Naive thymus-derived CD4-positive, alpha-beta T cell (primary cell): ENCODE measurements at regions of chr15 and their contacts with region 1.

Region 1: GRCh38 chr15:78872972-78873792 is 492 bp downstream of the MORF4L1 start:
- DNase-seq: peak; percentile 75 to 91 (median 90)
- ATAC-seq: peak; percentile 79
- H3K4me3 ChIP-seq: peak overlapping the region; percentile 100
- H3K4me3 Mint-ChIP-seq: peak overlapping the region; percentile 94 to 100 (median 99)
- H3K27ac ChIP-seq: peak overlapping the region; percentile 100
- H3K27ac Mint-ChIP-seq: peak overlapping the region; percentile 100
- H3K4me1 ChIP-seq: peaks cover 37 to 38% of the 10 kb centered on the region in 2 donors
- H3K4me1 Mint-ChIP-seq: peaks cover 29 to 54% (median 45%) of the 10 kb centered on the region in 7 donors
- H3K27me3 ChIP-seq: no peaks in the 10 kb centered on the region
- H3K27me3 Mint-ChIP-seq: no peaks in the 10 kb centered on the region

Region 2: DNA sequence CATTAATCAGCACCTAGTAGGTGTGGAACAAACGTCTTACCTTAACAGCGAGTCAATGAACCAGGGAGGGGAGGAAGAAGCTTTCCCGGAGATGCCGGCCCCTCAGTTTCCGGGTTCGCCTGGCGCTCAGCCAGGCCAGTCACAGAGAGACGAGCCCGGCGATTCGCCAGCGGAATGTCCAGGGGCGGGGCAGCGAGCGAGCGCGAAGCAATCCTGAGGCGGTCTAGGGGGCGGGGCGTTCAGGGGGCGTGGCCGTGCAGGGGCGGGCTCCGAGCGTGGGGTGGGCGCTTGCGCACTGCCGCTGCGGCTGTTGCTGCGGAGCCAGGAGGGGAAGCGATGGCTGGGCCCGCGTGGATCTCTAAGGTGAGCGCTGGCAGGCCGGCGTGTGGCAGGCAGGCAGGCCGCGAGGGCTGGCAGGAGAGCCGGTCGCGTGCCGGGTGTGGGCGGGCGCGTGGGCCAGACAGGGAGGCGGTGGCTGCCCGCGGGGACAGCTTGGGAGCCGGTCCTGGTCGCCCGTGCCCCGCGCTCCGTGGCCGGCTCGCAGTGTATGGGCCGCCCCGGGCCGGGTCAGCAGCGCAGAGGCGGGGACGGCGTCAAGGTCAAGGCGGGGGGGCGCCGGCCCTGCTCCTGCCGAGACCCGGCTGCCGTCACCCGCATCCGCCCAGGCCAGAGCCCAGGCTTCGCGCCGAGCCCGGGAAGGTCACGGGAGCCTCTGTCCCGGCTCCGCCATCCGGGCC is 723.9 kb before region 1 on chr15 and contains the start of gene IDH3A:
- CTCF ChIA-PET with region 1: no interaction called
- POLR2A ChIA-PET with region 1: no interaction called
- intact Hi-C with region 1: loop called in 1 of 2 experiments (anchors 1 kb)
- DNase-seq: peak; percentile 97 to 100 (median 99)
- ATAC-seq: peak; percentile 99
- H3K4me3 ChIP-seq: peak within 1 kb of the TSS; percentile 76
- H3K4me3 Mint-ChIP-seq: peak within 1 kb of the TSS; percentile 93 to 98 (median 96)
- H3K27ac ChIP-seq: peak within 1 kb of the TSS; percentile 77
- H3K27ac Mint-ChIP-seq: peak within 1 kb of the TSS; percentile 91 to 97 (median 95)
- H3K4me1 ChIP-seq: peaks cover 17 to 24% of the 10 kb centered on the region in 2 donors
- H3K4me1 Mint-ChIP-seq: peaks cover 25 to 51% (median 43%) of the 10 kb centered on the region in 7 donors
- H3K27me3 ChIP-seq: no peaks in the 10 kb centered on the region
- H3K27me3 Mint-ChIP-seq: no peaks in the 10 kb centered on the region
- total RNA-seq, gene IDH3A: 44.4 to 105 (median 61.1) TPM

Region 3: GRCh38 chr15:78540141-78540928 is 332.8 kb before region 1 on chr15 and contains the start of gene PSMA4:
- CTCF ChIA-PET with region 1: no interaction called
- POLR2A ChIA-PET with region 1: interaction called, 8 read pairs
- intact Hi-C with region 1: loop called (anchors 1 kb)
- DNase-seq: peak; percentile 89 to 97 (median 95)
- ATAC-seq: peak; percentile 93
- H3K4me3 ChIP-seq: peak within 1 kb of the TSS; percentile 89
- H3K4me3 Mint-ChIP-seq: peak within 1 kb of the TSS; percentile 86 to 99 (median 92)
- H3K27ac ChIP-seq: peak within 1 kb of the TSS; percentile 99
- H3K27ac Mint-ChIP-seq: peak within 1 kb of the TSS; percentile 91 to 100 (median 99)
- H3K4me1 ChIP-seq: peaks cover 19 to 23% of the 10 kb centered on the region in 2 donors
- H3K4me1 Mint-ChIP-seq: peaks cover 18 to 47% (median 35%) of the 10 kb centered on the region in 7 donors
- H3K27me3 ChIP-seq: no peaks in the 10 kb centered on the region
- H3K27me3 Mint-ChIP-seq: peaks cover 0 to 4% (median 0%) of the 10 kb centered on the region in 5 donors
- total RNA-seq, gene PSMA4: 69.6 to 284 (median 79.9) TPM

Region 4: GRCh38 chr15:78761891-78762385 is 111.2 kb before region 1 on chr15:
- CTCF ChIA-PET with region 1: no interaction called
- POLR2A ChIA-PET with region 1: interaction called, 12 read pairs
- intact Hi-C with region 1: loop called (anchors 1 kb)
- DNase-seq: no peak
- ATAC-seq: no peak
- H3K4me3 ChIP-seq: peak overlapping the region; percentile 73
- H3K4me3 Mint-ChIP-seq: peak overlapping the region; percentile 44 to 76 (median 72)
- H3K27ac ChIP-seq: peak overlapping the region; percentile 67
- H3K27ac Mint-ChIP-seq: peak overlapping the region; percentile 84 to 93 (median 90)
- H3K4me1 ChIP-seq: peaks cover 15 to 22% of the 10 kb centered on the region in 2 donors
- H3K4me1 Mint-ChIP-seq: peaks cover 9 to 35% (median 27%) of the 10 kb centered on the region in 7 donors
- H3K27me3 ChIP-seq: no peaks in the 10 kb centered on the region
- H3K27me3 Mint-ChIP-seq: no peaks in the 10 kb centered on the region

Region 5: GRCh38 chr15:78778422-78778821 is 94.8 kb before region 1 on chr15:
- CTCF ChIA-PET with region 1: no interaction called
- POLR2A ChIA-PET with region 1: no interaction called
- intact Hi-C with region 1: no loop called
- DNase-seq: no peak
- ATAC-seq: no peak
- H3K4me3 ChIP-seq: no peak overlapping the region
- H3K4me3 Mint-ChIP-seq: no peak overlapping the region
- H3K27ac ChIP-seq: no peak overlapping the region
- H3K27ac Mint-ChIP-seq: no peak overlapping the region
- H3K4me1 ChIP-seq: no peaks in the 10 kb centered on the region
- H3K4me1 Mint-ChIP-seq: no peaks in the 10 kb centered on the region
- H3K27me3 ChIP-seq: no peaks in the 10 kb centered on the region
- H3K27me3 Mint-ChIP-seq: peaks cover 0 to 4% (median 0%) of the 10 kb centered on the region in 5 donors

Region 6: DNA sequence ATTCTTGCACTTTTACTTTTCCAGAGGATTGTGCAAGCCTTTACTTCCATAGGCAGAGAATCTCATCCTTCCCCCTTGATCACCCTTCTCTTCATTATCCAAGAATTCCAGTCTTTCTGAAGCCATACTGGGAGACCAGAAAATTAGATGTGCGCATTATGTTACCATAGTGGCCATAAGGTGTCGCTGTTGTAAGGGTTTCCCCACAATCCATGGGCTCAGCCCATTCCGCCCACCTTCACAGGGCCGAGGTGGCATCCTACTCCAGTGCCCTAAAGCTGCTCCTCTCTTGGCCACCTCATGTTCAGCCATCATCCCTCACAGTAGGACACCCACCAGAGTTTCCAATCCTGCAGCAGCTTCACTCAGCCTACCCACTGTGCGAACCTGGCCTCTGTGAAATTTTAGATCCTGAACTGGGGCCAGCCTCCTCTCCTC is 36.6 kb after region 1 on chr15:
- CTCF ChIA-PET with region 1: interaction called, 4 read pairs
- POLR2A ChIA-PET with region 1: interaction called, 4 read pairs
- intact Hi-C with region 1: loop called in 1 of 2 experiments (anchors 5 kb)
- DNase-seq: peak in 2 of 9 donors; percentile 19 to 23
- ATAC-seq: peak; percentile 65
- H3K4me3 ChIP-seq: no peak overlapping the region
- H3K4me3 Mint-ChIP-seq: no peak overlapping the region
- H3K27ac ChIP-seq: no peak overlapping the region
- H3K27ac Mint-ChIP-seq: peak overlapping the region in 6 of 9 donors; percentile 1 to 68 (median 39)
- H3K4me1 ChIP-seq: no peaks in the 10 kb centered on the region
- H3K4me1 Mint-ChIP-seq: peaks cover 5 to 41% (median 26%) of the 10 kb centered on the region in 7 donors
- H3K27me3 ChIP-seq: no peaks in the 10 kb centered on the region
- H3K27me3 Mint-ChIP-seq: no peaks in the 10 kb centered on the region

Region 7: GRCh38 chr15:79310983-79311900 is 438.1 kb after region 1 on chr15 and contains the start of gene TMED3:
- CTCF ChIA-PET with region 1: no interaction called
- POLR2A ChIA-PET with region 1: no interaction called
- intact Hi-C with region 1: no loop called
- DNase-seq: peak; percentile 58 to 85 (median 79)
- ATAC-seq: peak; percentile 92
- H3K4me3 ChIP-seq: peak within 1 kb of the TSS; percentile 90
- H3K4me3 Mint-ChIP-seq: peak within 1 kb of the TSS; percentile 85 to 93 (median 90)
- H3K27ac ChIP-seq: peak within 1 kb of the TSS; percentile 62
- H3K27ac Mint-ChIP-seq: peak within 1 kb of the TSS; percentile 4 to 74 (median 66)
- H3K4me1 ChIP-seq: peaks cover 13 to 20% of the 10 kb centered on the region in 2 donors
- H3K4me1 Mint-ChIP-seq: peaks cover 24 to 52% (median 46%) of the 10 kb centered on the region in 7 donors
- H3K27me3 ChIP-seq: no peaks in the 10 kb centered on the region
- H3K27me3 Mint-ChIP-seq: peaks cover 0 to 29% (median 4%) of the 10 kb centered on the region in 5 donors
- total RNA-seq, gene TMED3: 18.6 to 40.5 (median 21.1) TPM

Region 8: DNA sequence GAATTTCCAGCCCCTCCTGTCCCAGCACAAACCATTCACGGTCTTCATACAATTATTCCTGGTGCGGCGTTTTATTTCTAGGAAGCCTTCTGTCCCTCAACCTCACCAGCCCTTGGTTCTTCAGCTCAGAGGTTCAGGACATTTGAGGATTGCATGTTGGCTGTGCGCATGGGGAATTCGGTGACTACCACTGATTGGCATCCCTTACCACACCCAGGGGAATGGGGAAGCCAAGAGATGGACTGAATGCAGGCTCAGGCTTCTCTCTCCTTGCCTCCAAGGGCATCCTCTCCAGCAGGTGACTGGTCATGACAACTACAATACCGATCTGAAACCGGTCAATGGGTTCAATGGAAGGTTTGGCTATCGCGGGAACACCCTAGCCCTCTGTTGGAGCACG is 869.8 kb after region 1 on chr15:
- CTCF ChIA-PET with region 1: no interaction called
- POLR2A ChIA-PET with region 1: no interaction called
- intact Hi-C with region 1: no loop called
- DNase-seq: no peak
- ATAC-seq: no peak
- H3K4me3 ChIP-seq: no peak overlapping the region
- H3K4me3 Mint-ChIP-seq: no peak overlapping the region
- H3K27ac ChIP-seq: no peak overlapping the region
- H3K27ac Mint-ChIP-seq: no peak overlapping the region
- H3K4me1 ChIP-seq: no peaks in the 10 kb centered on the region
- H3K4me1 Mint-ChIP-seq: no peaks in the 10 kb centered on the region
- H3K27me3 ChIP-seq: no peaks in the 10 kb centered on the region
- H3K27me3 Mint-ChIP-seq: peaks cover 0 to 8% (median 4%) of the 10 kb centered on the region in 5 donors

Region 9: DNA sequence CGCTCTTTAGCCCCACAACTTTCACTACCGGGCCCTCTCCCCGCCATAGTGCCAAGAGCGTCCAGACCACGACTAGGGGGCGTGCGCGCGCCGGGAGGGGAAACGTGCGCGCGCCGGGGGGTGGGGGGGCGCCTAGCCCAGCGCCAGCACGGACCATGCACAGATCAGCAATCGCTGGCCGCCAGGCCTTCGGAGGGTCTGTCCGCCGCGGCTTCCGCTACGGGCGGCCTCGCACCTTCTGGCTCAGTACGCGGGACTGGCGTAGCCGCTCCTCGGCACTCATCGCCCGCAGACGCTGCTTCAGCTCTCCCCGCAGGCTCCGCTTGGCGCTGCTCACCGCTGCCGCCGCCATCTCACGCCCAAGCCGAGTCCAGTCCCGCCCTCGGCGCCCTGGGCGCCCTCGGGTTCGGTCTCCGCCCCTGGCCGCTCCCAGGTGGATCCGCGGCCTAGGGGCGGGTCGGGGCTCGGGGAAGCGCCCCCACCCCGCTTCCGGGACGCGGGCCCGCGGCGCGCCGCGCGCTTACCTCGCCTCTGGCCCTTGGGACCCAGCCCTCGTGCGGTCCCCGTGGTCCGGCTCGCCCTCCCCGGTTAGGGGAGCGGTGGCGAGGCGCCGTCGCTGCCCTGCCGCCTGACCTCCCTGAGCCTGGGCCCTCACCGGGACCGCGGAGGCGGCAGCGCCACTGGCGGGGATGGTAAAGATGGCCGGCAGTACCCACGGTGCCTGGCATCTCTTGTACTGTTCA is 1023.6 kb after region 1 on chr15 and contains the start of gene MTHFS:
- CTCF ChIA-PET with region 1: no interaction called
- POLR2A ChIA-PET with region 1: interaction called, 3 read pairs
- intact Hi-C with region 1: loop called in 1 of 2 experiments (anchors 5 kb)
- DNase-seq: peak; percentile 73 to 87 (median 83)
- ATAC-seq: peak; percentile 92
- H3K4me3 ChIP-seq: peak within 1 kb of the TSS; percentile 71
- H3K4me3 Mint-ChIP-seq: peak within 1 kb of the TSS; percentile 91 to 100 (median 99)
- H3K27ac ChIP-seq: peak within 1 kb of the TSS; percentile 92
- H3K27ac Mint-ChIP-seq: peak within 1 kb of the TSS; percentile 97 to 100 (median 100)
- H3K4me1 ChIP-seq: peaks cover 20 to 23% of the 10 kb centered on the region in 2 donors
- H3K4me1 Mint-ChIP-seq: peaks cover 28 to 49% (median 46%) of the 10 kb centered on the region in 7 donors
- H3K27me3 ChIP-seq: no peaks in the 10 kb centered on the region
- H3K27me3 Mint-ChIP-seq: no peaks in the 10 kb centered on the region
- total RNA-seq, gene MTHFS: 15.8 to 31.8 (median 20.3) TPM

Region 10: GRCh38 chr15:80141916-80142598 is 1268.9 kb after region 1 on chr15:
- CTCF ChIA-PET with region 1: no interaction called
- POLR2A ChIA-PET with region 1: no interaction called
- intact Hi-C with region 1: no loop called
- DNase-seq: no peak
- ATAC-seq: no peak
- H3K4me3 ChIP-seq: no peak overlapping the region
- H3K4me3 Mint-ChIP-seq: no peak overlapping the region
- H3K27ac ChIP-seq: no peak overlapping the region
- H3K27ac Mint-ChIP-seq: no peak overlapping the region
- H3K4me1 ChIP-seq: no peaks in the 10 kb centered on the region
- H3K4me1 Mint-ChIP-seq: no peaks in the 10 kb centered on the region
- H3K27me3 ChIP-seq: no peaks in the 10 kb centered on the region
- H3K27me3 Mint-ChIP-seq: peaks cover 0 to 21% (median 0%) of the 10 kb centered on the region in 5 donors